Psoas muscle (tissue), 8 donors: ENCODE measurements at regions of chr2 and their contacts with region 1.

Region 1: GRCh38 chr2:54455563-54456361 is at the start of gene SPTBN1:
- DNase-seq: peak; percentile 92 to 96
- ATAC-seq: peak; percentile 82 to 88 (median 85)
- H3K4me3 ChIP-seq: peak within 1 kb of the TSS; percentile 85
- H3K27ac ChIP-seq: peak within 1 kb of the TSS; percentile 87
- H3K4me1 ChIP-seq: peaks cover 21% of the 10 kb centered on the region
- H3K27me3 ChIP-seq: no peaks in the 10 kb centered on the region
- CTCF ChIP-seq: no peak
- total RNA-seq, gene SPTBN1: 87.8 to 180 (median 96.2) TPM

Region 2: GRCh38 chr2:54122939-54123338 is 332.8 kb before region 1 on chr2:
- intact Hi-C with region 1: loop called in 1 of 2 experiments (anchors 5 kb)
- DNase-seq: no peak
- ATAC-seq: peak; percentile 97 to 99 (median 98)
- H3K4me3 ChIP-seq: peak overlapping the region; percentile 44
- H3K27ac ChIP-seq: peak overlapping the region; percentile 86
- H3K4me1 ChIP-seq: peaks cover 26% of the 10 kb centered on the region
- H3K27me3 ChIP-seq: no peaks in the 10 kb centered on the region
- CTCF ChIP-seq: no peak

Region 3: GRCh38 chr2:54206596-54206995 is 249.2 kb before region 1 on chr2:
- intact Hi-C with region 1: loop called in 1 of 2 experiments (anchors 2 kb)
- DNase-seq: no peak
- ATAC-seq: peak in 2 of 4 donors; percentile 51 to 64
- H3K4me3 ChIP-seq: no peak overlapping the region
- H3K27ac ChIP-seq: no peak overlapping the region
- H3K4me1 ChIP-seq: peaks cover 20% of the 10 kb centered on the region
- H3K27me3 ChIP-seq: no peaks in the 10 kb centered on the region
- CTCF ChIP-seq: peak; percentile 45

Region 4: GRCh38 chr2:54330162-54330925 is 125.4 kb before region 1 on chr2:
- intact Hi-C with region 1: loop called in 1 of 2 experiments (anchors 5 kb)
- DNase-seq: peak; percentile 96 to 99
- ATAC-seq: peak; percentile 98 to 99 (median 99)
- H3K4me3 ChIP-seq: peak overlapping the region; percentile 78
- H3K27ac ChIP-seq: peak overlapping the region; percentile 83
- H3K4me1 ChIP-seq: peaks cover 12% of the 10 kb centered on the region
- H3K27me3 ChIP-seq: no peaks in the 10 kb centered on the region
- CTCF ChIP-seq: no peak

Region 5: DNA sequence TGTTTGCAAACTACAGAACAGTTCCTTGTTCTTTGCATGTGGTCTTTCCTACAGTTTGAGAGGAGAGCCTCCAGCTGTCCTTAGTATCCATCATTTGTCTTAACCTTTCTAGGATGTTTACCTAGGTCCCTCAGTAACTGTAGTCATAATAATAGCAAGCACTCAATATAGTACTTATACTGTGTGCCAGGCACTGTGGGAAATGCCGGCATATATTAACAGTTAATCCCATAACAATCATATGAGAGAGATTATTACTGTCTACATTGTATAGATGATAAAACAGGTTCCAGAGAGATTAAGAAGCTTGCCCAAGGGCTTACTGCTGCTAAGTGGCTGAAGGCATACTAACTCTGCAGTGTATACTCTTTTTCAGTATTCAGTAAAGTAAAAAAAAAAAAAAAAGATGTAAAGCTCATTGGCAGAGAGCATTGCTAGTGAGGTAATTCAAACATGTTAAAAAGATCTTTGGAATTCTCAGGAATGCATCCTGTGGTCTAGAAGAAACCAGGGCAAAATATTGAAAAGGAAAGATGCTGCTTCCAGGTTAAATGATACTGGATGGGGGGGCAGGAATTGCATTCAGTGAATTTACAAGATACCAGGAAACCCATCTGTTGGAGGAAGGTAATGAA is 72.7 kb after region 1 on chr2:
- intact Hi-C with region 1: loop called in 1 of 2 experiments (anchors 5 kb)
- DNase-seq: no peak
- ATAC-seq: no peak
- H3K4me3 ChIP-seq: no peak overlapping the region
- H3K27ac ChIP-seq: no peak overlapping the region
- H3K4me1 ChIP-seq: peaks cover 25% of the 10 kb centered on the region
- H3K27me3 ChIP-seq: no peaks in the 10 kb centered on the region
- CTCF ChIP-seq: no peak